CD4-positive, alpha-beta T cell (primary cell): ENCODE measurements at regions of chr2 and their contacts with region 1.

Region 1: GRCh38 chr2:119771331-119771730 is 11.6 kb downstream of the PTPN4 start:
- DNase-seq: no peak
- ATAC-seq: no peak
- H3K4me3 ChIP-seq: no peak overlapping the region
- H3K4me3 Mint-ChIP-seq: peak overlapping the region; percentile 9
- H3K27ac ChIP-seq: no peak overlapping the region
- H3K27ac Mint-ChIP-seq: peak overlapping the region; percentile 7
- H3K4me1 ChIP-seq: peaks cover 21% of the 10 kb centered on the region
- H3K4me1 Mint-ChIP-seq: peaks cover 44% of the 10 kb centered on the region
- H3K27me3 ChIP-seq: no peaks in the 10 kb centered on the region
- H3K27me3 Mint-ChIP-seq: no peaks in the 10 kb centered on the region
- CTCF ChIP-seq: no peak

Region 2: GRCh38 chr2:119730671-119731193 is 40.6 kb before region 1 on chr2:
- CTCF ChIA-PET with region 1: no interaction called
- POLR2A ChIA-PET with region 1: no interaction called
- intact Hi-C with region 1: no loop called
- DNase-seq: no peak
- ATAC-seq: no peak
- H3K4me3 ChIP-seq: no peak overlapping the region
- H3K4me3 Mint-ChIP-seq: no peak overlapping the region
- H3K27ac ChIP-seq: no peak overlapping the region
- H3K27ac Mint-ChIP-seq: no peak overlapping the region
- H3K4me1 ChIP-seq: no peaks in the 10 kb centered on the region
- H3K4me1 Mint-ChIP-seq: no peaks in the 10 kb centered on the region
- H3K27me3 ChIP-seq: peaks cover 0 to 3% of the 10 kb centered on the region in 2 experiments
- H3K27me3 Mint-ChIP-seq: no peaks in the 10 kb centered on the region
- CTCF ChIP-seq: no peak

Region 3: DNA sequence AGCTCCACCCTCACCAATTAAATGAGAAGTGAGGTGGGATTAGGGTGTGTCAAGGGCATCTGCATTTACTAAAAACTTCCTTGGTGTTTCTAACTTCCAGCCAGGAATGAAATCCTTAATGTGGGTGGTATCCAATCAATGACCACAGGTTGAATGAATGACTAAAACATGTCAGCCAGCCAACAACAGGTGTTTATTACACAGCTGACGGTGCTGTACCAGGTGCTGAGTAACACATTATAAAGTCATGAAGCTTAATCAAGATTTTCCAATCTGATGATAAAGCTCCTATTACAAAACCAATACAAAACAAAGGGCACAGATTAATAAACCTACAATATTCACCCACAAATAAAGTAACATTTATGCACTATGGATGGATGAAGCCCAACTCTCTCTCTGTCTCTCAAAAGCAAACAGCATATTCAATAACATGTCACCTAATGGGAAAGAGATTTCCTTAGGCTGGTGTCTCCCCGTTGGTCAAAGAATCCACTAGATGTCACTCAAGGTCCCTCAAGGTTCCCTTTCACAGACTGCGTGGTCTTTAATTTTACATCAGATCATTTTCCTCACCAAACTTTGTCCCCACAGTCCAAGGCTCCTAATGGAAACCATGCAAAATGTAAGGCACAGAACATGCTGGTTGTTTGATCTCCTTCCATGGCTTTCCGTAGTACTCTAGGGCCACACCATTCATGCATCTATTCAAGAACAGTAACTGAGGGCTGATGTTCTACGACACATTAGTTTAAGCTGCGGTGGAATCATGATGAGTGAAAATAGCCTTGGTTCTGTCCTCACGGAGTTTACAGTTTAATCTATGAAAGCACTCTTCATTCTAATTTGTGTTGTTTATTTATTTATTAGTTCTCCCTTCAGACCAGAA is 18.0 kb before region 1 on chr2:
- CTCF ChIA-PET with region 1: no interaction called
- POLR2A ChIA-PET with region 1: no interaction called
- intact Hi-C with region 1: no loop called
- DNase-seq: peak in 8 of 14 experiments; percentile 9 to 75 (median 40)
- ATAC-seq: peak; percentile 86
- H3K4me3 ChIP-seq: no peak overlapping the region
- H3K4me3 Mint-ChIP-seq: no peak overlapping the region
- H3K27ac ChIP-seq: no peak overlapping the region
- H3K27ac Mint-ChIP-seq: no peak overlapping the region
- H3K4me1 ChIP-seq: no peaks in the 10 kb centered on the region
- H3K4me1 Mint-ChIP-seq: peaks cover 4% of the 10 kb centered on the region
- H3K27me3 ChIP-seq: no peaks in the 10 kb centered on the region
- H3K27me3 Mint-ChIP-seq: no peaks in the 10 kb centered on the region
- CTCF ChIP-seq: peak; percentile 91

Region 4: GRCh38 chr2:119820275-119820674 is 48.9 kb after region 1 on chr2:
- CTCF ChIA-PET with region 1: no interaction called
- POLR2A ChIA-PET with region 1: interaction called, 3 read pairs
- intact Hi-C with region 1: loop called in 1 of 2 experiments (anchors 2 kb)
- DNase-seq: no peak
- ATAC-seq: no peak
- H3K4me3 ChIP-seq: no peak overlapping the region
- H3K4me3 Mint-ChIP-seq: no peak overlapping the region
- H3K27ac ChIP-seq: no peak overlapping the region
- H3K27ac Mint-ChIP-seq: peak overlapping the region; percentile 1
- H3K4me1 ChIP-seq: no peaks in the 10 kb centered on the region
- H3K4me1 Mint-ChIP-seq: peaks cover 53% of the 10 kb centered on the region
- H3K27me3 ChIP-seq: no peaks in the 10 kb centered on the region
- H3K27me3 Mint-ChIP-seq: no peaks in the 10 kb centered on the region
- CTCF ChIP-seq: no peak